Naive thymus-derived CD4-positive, alpha-beta T cell (primary cell): ENCODE measurements at regions of chr1 and their contacts with region 1.

Region 1: DNA sequence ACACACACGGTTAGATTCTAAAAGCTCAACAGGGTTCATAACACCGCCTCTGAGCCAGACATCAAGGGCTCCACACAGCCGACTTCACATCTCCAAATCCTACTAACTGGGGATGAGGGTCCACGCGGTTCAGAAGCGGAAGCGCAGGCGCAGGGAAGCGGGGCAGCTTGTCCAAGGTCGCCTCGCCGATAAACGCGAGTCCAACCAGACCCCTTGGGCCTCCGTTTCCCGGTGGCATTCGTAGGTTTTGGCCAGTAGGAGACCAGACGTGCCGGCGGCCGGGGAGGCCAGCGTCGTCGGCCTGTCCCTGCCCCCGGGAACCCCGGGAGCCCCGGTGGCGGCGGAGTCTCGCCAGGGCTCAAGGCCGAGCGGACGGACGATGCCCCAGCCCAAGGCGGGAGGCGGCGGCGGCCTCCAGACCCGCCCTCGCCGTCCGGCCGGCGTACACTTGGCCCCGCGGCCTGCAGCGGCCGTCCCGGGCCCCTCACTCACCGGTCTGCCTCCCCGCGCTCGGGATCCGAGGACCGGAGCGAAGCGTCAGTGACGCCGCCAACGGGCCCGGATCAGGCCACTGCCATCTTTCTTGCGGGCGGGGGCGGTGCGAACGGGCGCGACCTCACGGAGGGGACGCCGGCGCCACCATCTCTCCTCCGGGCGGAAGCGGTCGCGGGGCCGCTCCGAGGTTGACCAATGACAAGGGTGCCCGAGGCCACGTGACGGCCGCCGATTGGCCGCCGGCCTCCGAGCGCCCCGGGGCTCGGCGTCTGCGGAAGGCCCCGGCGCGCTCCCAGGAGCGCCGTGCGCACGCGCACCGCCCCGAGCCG is at the start of gene SDF4:
- DNase-seq: peak; percentile 90 to 98 (median 96)
- ATAC-seq: peak; percentile 96
- H3K4me3 ChIP-seq: peak within 1 kb of the TSS; percentile 90
- H3K4me3 Mint-ChIP-seq: peak within 1 kb of the TSS; percentile 89 to 96 (median 93)
- H3K27ac ChIP-seq: peak within 1 kb of the TSS; percentile 96
- H3K27ac Mint-ChIP-seq: peak within 1 kb of the TSS; percentile 68 to 94 (median 92)
- H3K4me1 ChIP-seq: peaks cover 12 to 28% of the 10 kb centered on the region in 2 donors
- H3K4me1 Mint-ChIP-seq: peaks cover 16 to 42% (median 33%) of the 10 kb centered on the region in 7 donors
- H3K27me3 ChIP-seq: no peaks in the 10 kb centered on the region
- H3K27me3 Mint-ChIP-seq: no peaks in the 10 kb centered on the region
- total RNA-seq, gene SDF4: 75.8 to 124 (median 110) TPM

Region 2: DNA sequence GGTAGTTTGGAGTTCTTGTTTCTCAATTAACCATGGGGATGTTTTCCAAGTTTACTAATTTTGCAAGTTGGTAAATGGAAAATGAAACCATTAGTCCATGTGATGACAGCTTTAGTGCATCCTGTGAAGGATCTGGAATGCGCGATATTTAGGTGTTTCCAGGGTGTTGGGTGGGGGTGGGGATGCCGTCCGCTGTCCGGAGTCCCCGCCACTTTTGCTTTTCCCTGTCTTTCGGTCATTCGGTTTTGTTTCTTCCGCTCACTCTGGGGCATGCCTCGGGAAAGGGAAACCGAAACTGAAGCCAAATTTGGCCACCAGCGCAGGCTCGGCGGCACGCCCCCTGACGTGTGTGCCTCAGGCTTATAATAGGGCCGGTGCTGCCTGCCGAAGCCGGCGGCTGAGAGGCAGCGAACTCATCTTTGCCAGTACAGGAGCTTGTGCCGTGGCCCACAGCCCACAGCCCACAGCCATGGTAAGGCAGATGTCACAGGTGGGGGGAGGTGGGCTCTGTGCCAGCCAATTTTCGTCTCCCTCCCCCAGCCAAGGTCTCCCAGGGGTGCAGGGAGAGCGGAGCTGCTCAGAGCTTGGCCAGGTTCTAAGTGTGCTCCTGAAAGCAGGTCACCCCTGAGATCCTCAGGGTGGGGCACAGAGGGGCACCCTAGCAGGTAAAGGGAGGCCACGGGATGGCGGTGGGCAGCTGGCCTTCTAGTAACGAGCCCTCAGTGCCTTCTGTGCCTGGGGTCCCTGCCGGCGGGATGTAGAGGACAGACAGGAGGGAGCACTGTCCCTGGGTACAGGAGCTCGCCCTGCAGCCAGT is 218.3 kb before region 1 on chr1 and contains the start of gene ISG15:
- CTCF ChIA-PET with region 1: no interaction called
- POLR2A ChIA-PET with region 1: no interaction called
- intact Hi-C with region 1: loop called in 1 of 2 experiments (anchors 2 kb)
- DNase-seq: peak; percentile 73 to 90 (median 85)
- ATAC-seq: peak; percentile 98
- H3K4me3 ChIP-seq: peak within 1 kb of the TSS; percentile 95
- H3K4me3 Mint-ChIP-seq: peak within 1 kb of the TSS; percentile 89 to 100 (median 96)
- H3K27ac ChIP-seq: peak within 1 kb of the TSS; percentile 83
- H3K27ac Mint-ChIP-seq: peak within 1 kb of the TSS; percentile 96 to 100 (median 99)
- H3K4me1 ChIP-seq: peaks cover 13 to 18% of the 10 kb centered on the region in 2 donors
- H3K4me1 Mint-ChIP-seq: peaks cover 19 to 35% (median 29%) of the 10 kb centered on the region in 7 donors
- H3K27me3 ChIP-seq: no peaks in the 10 kb centered on the region
- H3K27me3 Mint-ChIP-seq: peaks cover 0 to 4% (median 1%) of the 10 kb centered on the region in 5 donors
- total RNA-seq, gene ISG15: 17.4 to 227 (median 25.4) TPM

Region 3: GRCh38 chr1:1069061-1069708 is 162.4 kb before region 1 on chr1:
- CTCF ChIA-PET with region 1: no interaction called
- POLR2A ChIA-PET with region 1: no interaction called
- intact Hi-C with region 1: loop called in 1 of 2 experiments (anchors 2 kb)
- DNase-seq: peak; percentile 86 to 98 (median 92)
- ATAC-seq: peak; percentile 83
- H3K4me3 ChIP-seq: peak overlapping the region; percentile 81
- H3K4me3 Mint-ChIP-seq: peak overlapping the region; percentile 52 to 88 (median 78)
- H3K27ac ChIP-seq: peak overlapping the region; percentile 73
- H3K27ac Mint-ChIP-seq: peak overlapping the region in 6 of 9 donors; percentile 36 to 88 (median 72)
- H3K4me1 ChIP-seq: peaks cover 4 to 10% of the 10 kb centered on the region in 2 donors
- H3K4me1 Mint-ChIP-seq: peaks cover 0 to 9% (median 3%) of the 10 kb centered on the region in 7 donors
- H3K27me3 ChIP-seq: no peaks in the 10 kb centered on the region
- H3K27me3 Mint-ChIP-seq: no peaks in the 10 kb centered on the region

Region 4: GRCh38 chr1:1157426-1157913 is 74.1 kb before region 1 on chr1:
- CTCF ChIA-PET with region 1: no interaction called
- POLR2A ChIA-PET with region 1: interaction called, 5 read pairs
- intact Hi-C with region 1: loop called in 1 of 2 experiments (anchors 1 kb)
- DNase-seq: peak; percentile 22 to 72 (median 42)
- ATAC-seq: peak; percentile 73
- H3K4me3 ChIP-seq: peak overlapping the region; percentile 81
- H3K4me3 Mint-ChIP-seq: peak overlapping the region; percentile 63 to 85 (median 76)
- H3K27ac ChIP-seq: peak overlapping the region; percentile 91
- H3K27ac Mint-ChIP-seq: peak overlapping the region in 8 of 9 donors; percentile 47 to 83 (median 59)
- H3K4me1 ChIP-seq: peaks cover 4 to 5% of the 10 kb centered on the region in 2 donors
- H3K4me1 Mint-ChIP-seq: peaks cover 0 to 12% (median 7%) of the 10 kb centered on the region in 7 donors
- H3K27me3 ChIP-seq: no peaks in the 10 kb centered on the region
- H3K27me3 Mint-ChIP-seq: no peaks in the 10 kb centered on the region

Region 5: GRCh38 chr1:1200851-1201810 is 30.5 kb before region 1 on chr1:
- CTCF ChIA-PET with region 1: no interaction called
- POLR2A ChIA-PET with region 1: no interaction called
- intact Hi-C with region 1: loop called in 1 of 2 experiments (anchors 1 kb)
- DNase-seq: peak; percentile 74 to 97 (median 83)
- ATAC-seq: peak; percentile 92
- H3K4me3 ChIP-seq: peak overlapping the region; percentile 24
- H3K4me3 Mint-ChIP-seq: peak overlapping the region in 9 of 10 donors; percentile 27 to 75 (median 59)
- H3K27ac ChIP-seq: peak overlapping the region; percentile 72
- H3K27ac Mint-ChIP-seq: peak overlapping the region in 5 of 9 donors; percentile 40 to 75 (median 62)
- H3K4me1 ChIP-seq: no peaks in the 10 kb centered on the region
- H3K4me1 Mint-ChIP-seq: peaks cover 0 to 11% (median 0%) of the 10 kb centered on the region in 7 donors
- H3K27me3 ChIP-seq: no peaks in the 10 kb centered on the region
- H3K27me3 Mint-ChIP-seq: no peaks in the 10 kb centered on the region

Region 6: GRCh38 chr1:1250786-1251284 is 19.2 kb after region 1 on chr1:
- CTCF ChIA-PET with region 1: no interaction called
- POLR2A ChIA-PET with region 1: interaction called, 7 read pairs
- intact Hi-C with region 1: loop called in 1 of 2 experiments (anchors 1 kb)
- DNase-seq: peak in 8 of 9 donors; percentile 39 to 79 (median 67)
- ATAC-seq: peak; percentile 95
- H3K4me3 ChIP-seq: peak overlapping the region; percentile 14
- H3K4me3 Mint-ChIP-seq: peak overlapping the region; percentile 33 to 82 (median 74)
- H3K27ac ChIP-seq: peak overlapping the region; percentile 69
- H3K27ac Mint-ChIP-seq: peak overlapping the region; percentile 40 to 96 (median 91)
- H3K4me1 ChIP-seq: peaks cover 10 to 12% of the 10 kb centered on the region in 2 donors
- H3K4me1 Mint-ChIP-seq: peaks cover 4 to 29% (median 11%) of the 10 kb centered on the region in 7 donors
- H3K27me3 ChIP-seq: no peaks in the 10 kb centered on the region
- H3K27me3 Mint-ChIP-seq: peaks cover 0 to 3% (median 0%) of the 10 kb centered on the region in 5 donors

Region 7: DNA sequence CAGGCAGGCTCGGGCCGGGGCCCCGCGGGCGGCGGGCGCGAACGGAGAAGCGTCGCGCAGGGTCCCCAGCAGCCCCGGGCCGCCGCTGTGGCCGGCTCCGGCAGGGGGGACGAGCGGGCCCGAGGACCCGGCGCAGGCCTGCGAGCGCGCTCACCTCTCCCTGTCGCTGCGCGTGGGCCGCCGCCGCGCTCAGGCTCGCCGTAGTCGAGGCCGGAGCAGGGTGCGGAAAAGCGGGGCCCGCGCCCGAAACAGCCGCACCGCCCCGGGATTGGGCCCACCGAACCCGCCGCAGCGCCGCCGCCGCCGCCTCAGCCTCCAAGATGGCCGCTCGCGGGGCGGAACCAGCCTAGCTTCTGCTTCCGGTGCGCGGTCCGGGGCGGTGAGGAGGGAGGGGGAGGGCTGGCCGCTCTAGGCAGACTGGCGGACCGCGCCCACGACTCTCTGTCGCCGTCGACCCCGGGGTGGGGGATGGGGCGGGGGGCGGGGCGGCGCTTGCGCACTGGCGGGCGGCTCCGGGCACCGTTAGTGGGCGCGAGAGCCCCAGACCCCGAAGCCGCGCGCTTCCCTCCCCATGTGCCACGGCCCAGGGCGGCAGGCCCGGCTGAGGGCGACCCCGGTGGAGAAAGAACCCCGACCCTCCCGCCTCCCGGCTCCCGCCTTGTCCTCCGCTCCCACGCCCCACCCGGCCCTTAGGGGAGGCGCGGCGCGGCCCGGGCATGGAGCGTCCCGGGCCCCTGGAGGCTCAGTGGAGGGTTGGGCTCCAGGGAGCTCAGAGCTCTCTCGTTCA is 42.1 kb after region 1 on chr1 and contains the start of gene UBE2J2:
- CTCF ChIA-PET with region 1: no interaction called
- POLR2A ChIA-PET with region 1: interaction called, 4 read pairs
- intact Hi-C with region 1: loop called (anchors 1 kb)
- DNase-seq: peak; percentile 83 to 92 (median 90)
- ATAC-seq: peak; percentile 99
- H3K4me3 ChIP-seq: peak within 1 kb of the TSS; percentile 77
- H3K4me3 Mint-ChIP-seq: peak within 1 kb of the TSS; percentile 79 to 92 (median 88)
- H3K27ac ChIP-seq: peak within 1 kb of the TSS; percentile 90
- H3K27ac Mint-ChIP-seq: peak within 1 kb of the TSS; percentile 36 to 94 (median 83)
- H3K4me1 ChIP-seq: peaks cover 28 to 39% of the 10 kb centered on the region in 2 donors
- H3K4me1 Mint-ChIP-seq: peaks cover 21 to 45% (median 35%) of the 10 kb centered on the region in 7 donors
- H3K27me3 ChIP-seq: no peaks in the 10 kb centered on the region
- H3K27me3 Mint-ChIP-seq: no peaks in the 10 kb centered on the region
- total RNA-seq, gene UBE2J2: 62.3 to 89.3 (median 75.1) TPM